A673 (cell line): ENCODE measurements at regions of chr2 and their contacts with region 1.

Region 1: DNA sequence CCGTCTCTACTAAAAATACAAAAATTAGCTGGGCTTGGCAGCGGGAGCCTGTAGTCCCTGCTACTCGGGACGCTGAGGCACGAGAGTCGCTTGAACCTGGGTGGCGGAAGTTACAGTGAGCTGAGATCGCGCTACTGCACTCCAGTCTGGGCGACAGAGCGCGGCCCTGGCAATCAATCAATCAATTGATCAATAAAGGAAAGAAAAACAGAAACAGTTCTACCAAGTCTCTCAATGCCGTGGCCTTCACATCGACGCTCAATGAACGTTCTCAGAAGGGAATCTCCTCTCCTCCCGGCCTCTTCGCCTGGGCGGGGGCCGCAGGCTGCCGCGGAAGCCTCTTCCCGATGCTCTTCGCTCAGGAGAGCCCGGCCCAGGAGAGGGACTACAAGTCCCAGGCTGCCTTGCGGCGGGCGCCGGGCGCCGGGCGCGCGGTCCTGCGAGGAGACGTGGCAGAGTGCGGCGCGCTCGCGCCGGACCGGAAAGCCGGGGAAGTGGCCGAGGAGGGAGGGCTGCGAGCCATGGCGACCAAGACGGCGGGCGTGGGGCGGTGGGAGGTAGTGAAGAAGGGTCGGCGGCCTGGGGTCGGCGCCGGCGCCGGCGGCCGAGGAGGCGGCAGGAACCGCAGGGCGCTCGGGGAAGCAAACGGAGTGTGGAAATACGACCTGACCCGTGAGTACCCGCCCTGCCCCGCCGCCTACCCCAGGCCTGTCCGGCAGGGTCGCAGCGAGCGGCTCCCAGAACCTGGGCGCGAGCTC is at the start of gene TMEM214:
- DNase-seq: peak; percentile 92
- H3K4me3 ChIP-seq: peak within 1 kb of the TSS; percentile 99
- H3K27ac ChIP-seq: peak within 1 kb of the TSS; percentile 87
- H3K4me1 ChIP-seq: peaks cover 11% of the 10 kb centered on the region
- H3K27me3 ChIP-seq: no peaks in the 10 kb centered on the region
- CTCF ChIP-seq: no peak
- total RNA-seq, gene TMEM214: 76.7 and 77.8 TPM in 2 replicates

Region 2: GRCh38 chr2:27050281-27050995 is 17.8 kb after region 1 on chr2:
- CTCF ChIA-PET with region 1: no interaction called
- POLR2A ChIA-PET with region 1: no interaction called
- intact Hi-C with region 1: loop called (anchors 1 kb)
- DNase-seq: peak; percentile 97
- H3K4me3 ChIP-seq: peak overlapping the region; percentile 74
- H3K27ac ChIP-seq: peak overlapping the region; percentile 91
- H3K4me1 ChIP-seq: peaks cover 12% of the 10 kb centered on the region
- H3K27me3 ChIP-seq: no peaks in the 10 kb centered on the region
- CTCF ChIP-seq: peak; percentile 45